ENCODE measurements at regions of chr10 and their contacts with region 1.

Region 1: DNA sequence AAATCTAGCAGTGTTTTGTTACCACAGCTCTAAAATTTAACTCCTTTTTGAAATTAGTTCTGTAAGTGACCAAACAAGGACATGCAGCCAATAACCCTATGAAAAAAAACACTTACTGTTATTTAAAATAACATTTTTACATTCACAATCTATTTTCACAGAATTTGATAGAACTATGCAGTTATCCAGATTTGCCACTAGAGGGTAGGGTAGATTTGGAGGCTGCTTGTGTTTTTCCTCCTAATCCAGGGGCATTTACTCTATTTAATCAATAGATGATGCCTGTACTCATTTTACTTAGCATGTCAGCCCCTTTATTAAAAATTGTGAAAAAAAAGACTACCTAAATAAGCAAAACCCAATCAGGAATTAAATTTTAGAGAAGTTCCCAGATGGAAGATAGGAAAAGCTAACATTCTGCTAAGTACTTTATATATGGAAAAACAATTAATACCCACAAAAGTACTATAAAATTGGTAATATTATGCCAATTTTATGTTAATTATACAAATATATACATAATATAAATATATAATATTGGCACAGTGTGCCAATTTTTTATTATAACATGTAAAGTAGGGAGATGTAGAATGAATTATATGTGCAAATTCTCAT is 18.1 kb upstream of the LIPK start:
- DNase-seq: no peak
- H3K4me3 ChIP-seq: no peak overlapping the region
- H3K27ac ChIP-seq: no peak overlapping the region
- H3K4me1 ChIP-seq: no peaks in the 10 kb centered on the region
- H3K27me3 ChIP-seq: no peaks in the 10 kb centered on the region
- CTCF ChIP-seq: peak; percentile 41 to 74 (median 62)
- POLR2A ChIP-seq: no peak

Region 2: DNA sequence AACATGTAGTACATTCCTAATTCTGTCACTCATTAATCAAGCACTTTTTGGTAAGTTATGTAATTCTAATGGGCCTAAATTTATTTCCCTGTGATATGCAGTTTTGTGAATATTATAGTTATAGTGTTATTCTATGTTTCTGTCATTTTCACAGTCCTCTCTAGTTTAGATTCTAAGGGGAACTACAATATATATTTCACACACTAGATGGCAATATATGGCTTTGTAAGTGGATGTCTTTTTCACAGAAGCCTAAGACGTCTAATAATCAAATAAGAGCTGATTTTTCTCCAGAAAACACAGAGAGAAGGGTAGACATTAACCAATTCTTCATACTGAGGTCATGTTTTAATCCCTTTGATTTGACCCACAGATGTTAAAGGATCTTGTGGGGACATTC is 122.9 kb before region 1 on chr10:
- intact Hi-C with region 1: no loop called
- DNase-seq: no peak
- H3K4me3 ChIP-seq: no peak overlapping the region
- H3K27ac ChIP-seq: no peak overlapping the region
- H3K4me1 ChIP-seq: no peaks in the 10 kb centered on the region
- H3K27me3 ChIP-seq: no peaks in the 10 kb centered on the region
- CTCF ChIP-seq: peak in 3 of 6 experiments; percentile 34 to 51 (median 50)
- POLR2A ChIP-seq: no peak

Region 3: DNA sequence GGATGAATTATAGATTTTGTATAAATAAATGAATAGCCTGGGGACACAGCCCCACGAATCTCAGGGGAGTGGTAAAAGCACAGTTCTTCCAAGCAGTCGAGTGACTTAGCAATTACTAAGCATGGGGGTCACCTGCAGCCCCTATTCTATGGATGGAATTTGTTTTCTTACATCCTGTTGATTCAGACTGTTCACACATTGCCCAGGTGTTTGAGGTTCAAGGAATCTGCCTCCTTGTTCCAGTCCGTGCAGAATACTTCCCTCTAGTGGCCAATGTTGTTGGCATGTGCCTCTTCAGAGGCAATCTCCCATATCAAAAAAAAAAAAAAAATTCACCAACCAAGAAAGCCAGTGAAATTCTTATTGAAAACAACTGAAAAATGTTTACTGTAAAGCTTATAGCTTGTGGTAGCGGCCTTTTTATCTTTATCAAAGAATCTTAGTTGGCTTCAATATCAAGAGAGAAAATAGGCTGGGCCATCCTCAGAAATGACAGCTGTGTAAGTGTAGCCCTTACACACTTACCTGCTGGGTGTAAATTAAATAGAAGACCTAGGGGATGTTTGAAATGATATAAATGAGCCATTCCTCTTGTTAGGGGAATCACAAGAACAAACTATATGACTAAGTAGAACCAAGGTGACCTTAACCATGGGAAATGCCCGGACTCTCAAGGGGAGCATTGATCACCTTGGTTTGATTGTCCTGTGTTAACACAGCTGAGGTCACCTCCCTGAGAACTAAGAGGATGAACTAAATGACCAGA is 122.4 kb after region 1 on chr10:
- intact Hi-C with region 1: loop called (anchors 10 kb)
- DNase-seq: no peak
- H3K4me3 ChIP-seq: no peak overlapping the region
- H3K27ac ChIP-seq: no peak overlapping the region
- H3K4me1 ChIP-seq: no peaks in the 10 kb centered on the region
- H3K27me3 ChIP-seq: peaks cover 0 to 6% (median 0%) of the 10 kb centered on the region in 4 donors
- CTCF ChIP-seq: peak; percentile 26 to 73 (median 58)
- POLR2A ChIP-seq: no peak